ENCODE measurements at regions of chr7 and their contacts with region 1.

Region 1: DNA sequence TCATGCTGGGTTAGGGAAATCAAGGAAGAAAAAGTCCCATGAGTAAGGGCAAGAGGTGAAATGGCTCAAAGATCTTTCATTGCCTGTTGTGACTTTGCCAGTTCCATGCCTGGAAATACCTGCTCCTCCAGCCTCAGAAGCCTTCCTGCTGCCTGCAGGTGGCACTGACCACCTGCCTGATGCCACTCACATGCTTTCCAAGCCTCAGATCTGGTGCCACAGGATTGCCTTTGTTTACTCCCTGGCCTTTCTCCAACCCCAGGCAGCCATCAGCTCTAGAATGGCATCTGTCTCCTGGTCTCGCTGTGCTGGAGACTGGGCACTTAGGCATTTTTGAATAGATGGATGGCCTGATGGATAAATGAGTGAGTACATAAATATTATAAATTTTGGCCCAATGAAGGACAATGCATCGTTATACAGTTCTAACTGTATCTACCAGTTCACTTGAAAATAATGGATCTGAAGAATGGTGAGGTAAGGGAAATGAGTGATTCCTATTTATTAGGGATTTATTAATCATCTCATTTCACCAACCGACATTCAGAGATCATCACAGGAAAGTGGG is 657.2 kb downstream of the INHBA start:
- DNase-seq: peak; percentile 86
- H3K4me3 Mint-ChIP-seq: no peak overlapping the region
- H3K27ac Mint-ChIP-seq: peak overlapping the region; percentile 66
- H3K4me1 Mint-ChIP-seq: peaks cover 54% of the 10 kb centered on the region
- H3K27me3 Mint-ChIP-seq: no peaks in the 10 kb centered on the region
- CTCF ChIP-seq: peak; percentile 88

Region 2: GRCh38 chr7:40329601-40330153 is 716.0 kb before region 1 on chr7:
- CTCF ChIA-PET with region 1: no interaction called
- intact Hi-C with region 1: loop called (anchors 2 kb)
- DNase-seq: peak; percentile 14
- H3K4me3 Mint-ChIP-seq: no peak overlapping the region
- H3K27ac Mint-ChIP-seq: no peak overlapping the region
- H3K4me1 Mint-ChIP-seq: no peaks in the 10 kb centered on the region
- H3K27me3 Mint-ChIP-seq: no peaks in the 10 kb centered on the region
- CTCF ChIP-seq: peak; percentile 85

Region 3: GRCh38 chr7:40918701-40919271 is 126.9 kb before region 1 on chr7:
- CTCF ChIA-PET with region 1: no interaction called
- intact Hi-C with region 1: no loop called
- DNase-seq: no peak
- H3K4me3 Mint-ChIP-seq: no peak overlapping the region
- H3K27ac Mint-ChIP-seq: peak overlapping the region; percentile 6
- H3K4me1 Mint-ChIP-seq: peaks cover 30% of the 10 kb centered on the region
- H3K27me3 Mint-ChIP-seq: no peaks in the 10 kb centered on the region
- CTCF ChIP-seq: no peak

Region 4: GRCh38 chr7:41005381-41005911 is 40.2 kb before region 1 on chr7:
- CTCF ChIA-PET with region 1: interaction called, 5 read pairs
- intact Hi-C with region 1: loop called (anchors 1 kb)
- DNase-seq: peak; percentile 68
- H3K4me3 Mint-ChIP-seq: peak overlapping the region; percentile 27
- H3K27ac Mint-ChIP-seq: peak overlapping the region; percentile 96
- H3K4me1 Mint-ChIP-seq: peaks cover 80% of the 10 kb centered on the region
- H3K27me3 Mint-ChIP-seq: no peaks in the 10 kb centered on the region
- CTCF ChIP-seq: no peak

Region 5: GRCh38 chr7:41189866-41190265 is 144.2 kb after region 1 on chr7:
- CTCF ChIA-PET with region 1: interaction called, 4 read pairs
- intact Hi-C with region 1: loop called (anchors 2 kb)
- DNase-seq: peak; percentile 54
- H3K4me3 Mint-ChIP-seq: no peak overlapping the region
- H3K27ac Mint-ChIP-seq: peak overlapping the region; percentile 95
- H3K4me1 Mint-ChIP-seq: peaks cover 49% of the 10 kb centered on the region
- H3K27me3 Mint-ChIP-seq: no peaks in the 10 kb centered on the region
- CTCF ChIP-seq: no peak

Region 6: GRCh38 chr7:41472427-41473125 is 426.9 kb after region 1 on chr7:
- CTCF ChIA-PET with region 1: no interaction called
- intact Hi-C with region 1: loop called (anchors 10 kb)
- DNase-seq: no peak
- H3K4me3 Mint-ChIP-seq: no peak overlapping the region
- H3K27ac Mint-ChIP-seq: peak overlapping the region; percentile 2
- H3K4me1 Mint-ChIP-seq: peaks cover 20% of the 10 kb centered on the region
- H3K27me3 Mint-ChIP-seq: no peaks in the 10 kb centered on the region
- CTCF ChIP-seq: no peak

Region 7: GRCh38 chr7:41705109-41705901 is 659.7 kb after region 1 on chr7:
- CTCF ChIA-PET with region 1: interaction called, 33 read pairs
- intact Hi-C with region 1: loop called (anchors 1 kb)
- DNase-seq: peak; percentile 98
- H3K4me3 Mint-ChIP-seq: peak overlapping the region; percentile 75
- H3K27ac Mint-ChIP-seq: peak overlapping the region; percentile 52
- H3K4me1 Mint-ChIP-seq: peaks cover 69% of the 10 kb centered on the region
- H3K27me3 Mint-ChIP-seq: no peaks in the 10 kb centered on the region
- CTCF ChIP-seq: peak; percentile 97